Activated B cell treated with CpG ODN at 0.5 μM for 24 hours (primary cell): ENCODE measurements at regions of chr20 and their contacts with region 1.

Region 1: GRCh38 chr20:43942661-43943290 is 28.1 kb downstream of the TOX2 start:
- DNase-seq: no peak
- ATAC-seq: peak; percentile 63
- H3K4me3 Mint-ChIP-seq: peak overlapping the region; percentile 33
- H3K27ac Mint-ChIP-seq: peak overlapping the region; percentile 84
- H3K4me1 Mint-ChIP-seq: peaks cover 23% of the 10 kb centered on the region
- H3K27me3 Mint-ChIP-seq: no peaks in the 10 kb centered on the region
- CTCF ChIP-seq: no peak

Region 2: GRCh38 chr20:44001667-44002596 is 59.2 kb after region 1 on chr20:
- CTCF ChIA-PET with region 1: no interaction called
- POLR2A ChIA-PET with region 1: no interaction called
- intact Hi-C with region 1: no loop called
- DNase-seq: no peak
- ATAC-seq: no peak
- H3K4me3 Mint-ChIP-seq: no peak overlapping the region
- H3K27ac Mint-ChIP-seq: no peak overlapping the region
- H3K4me1 Mint-ChIP-seq: peaks cover 4% of the 10 kb centered on the region
- H3K27me3 Mint-ChIP-seq: peaks cover 12% of the 10 kb centered on the region
- CTCF ChIP-seq: no peak

Region 3: DNA sequence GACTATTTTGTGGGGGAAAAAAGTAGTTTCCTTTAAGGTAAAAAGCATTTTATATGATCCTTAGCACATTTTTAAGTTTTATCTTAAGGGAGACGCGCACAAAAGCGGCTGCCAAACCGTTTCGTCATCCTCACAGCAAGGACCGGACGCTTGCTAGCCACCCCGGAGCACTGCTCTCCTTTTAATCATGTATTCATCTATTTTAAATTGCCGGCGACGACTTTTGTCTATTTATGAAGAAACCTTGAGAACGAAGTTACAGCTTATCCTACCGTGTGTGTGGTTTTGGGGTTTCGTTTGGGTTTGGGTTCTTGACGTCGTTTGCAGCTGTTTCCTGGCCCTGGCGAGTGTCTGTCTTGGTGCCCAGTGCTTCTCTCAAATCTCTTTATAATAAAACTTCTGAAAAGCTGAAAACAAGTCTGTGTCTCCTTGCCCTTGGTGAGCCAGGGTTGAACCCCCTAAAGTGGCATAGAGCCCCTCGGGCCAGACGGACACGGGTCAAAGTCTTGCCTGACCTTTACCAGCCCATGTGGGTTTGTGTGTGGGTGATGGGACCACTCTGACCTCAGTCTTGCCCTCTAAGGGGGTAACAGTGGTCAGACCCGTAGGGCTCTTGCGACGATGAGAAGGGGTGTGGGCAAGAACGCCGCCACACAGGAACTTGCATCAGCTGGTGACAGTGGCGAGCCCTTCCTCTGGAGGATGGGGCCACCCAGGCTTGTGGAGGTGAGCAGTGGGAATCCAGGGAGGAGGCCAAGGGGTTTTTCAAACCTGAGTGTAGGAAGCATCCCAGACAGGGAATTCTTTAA is 126.6 kb after region 1 on chr20:
- CTCF ChIA-PET with region 1: no interaction called
- POLR2A ChIA-PET with region 1: interaction called, 4 read pairs
- intact Hi-C with region 1: loop called (anchors 1 kb)
- DNase-seq: peak; percentile 44
- ATAC-seq: peak; percentile 60
- H3K4me3 Mint-ChIP-seq: peak overlapping the region; percentile 80
- H3K27ac Mint-ChIP-seq: peak overlapping the region; percentile 88
- H3K4me1 Mint-ChIP-seq: peaks cover 39% of the 10 kb centered on the region
- H3K27me3 Mint-ChIP-seq: peaks cover 5% of the 10 kb centered on the region
- CTCF ChIP-seq: no peak